Dendritic cell treated with granulocyte-macrophage colony-stimulating factor and Interleukin-4, amounts not matched to agents 40 ng/mL and 50 ng/mL, for 4 days (primary cell): ENCODE measurements at regions of chr18 and their contacts with region 1.

Region 1: DNA sequence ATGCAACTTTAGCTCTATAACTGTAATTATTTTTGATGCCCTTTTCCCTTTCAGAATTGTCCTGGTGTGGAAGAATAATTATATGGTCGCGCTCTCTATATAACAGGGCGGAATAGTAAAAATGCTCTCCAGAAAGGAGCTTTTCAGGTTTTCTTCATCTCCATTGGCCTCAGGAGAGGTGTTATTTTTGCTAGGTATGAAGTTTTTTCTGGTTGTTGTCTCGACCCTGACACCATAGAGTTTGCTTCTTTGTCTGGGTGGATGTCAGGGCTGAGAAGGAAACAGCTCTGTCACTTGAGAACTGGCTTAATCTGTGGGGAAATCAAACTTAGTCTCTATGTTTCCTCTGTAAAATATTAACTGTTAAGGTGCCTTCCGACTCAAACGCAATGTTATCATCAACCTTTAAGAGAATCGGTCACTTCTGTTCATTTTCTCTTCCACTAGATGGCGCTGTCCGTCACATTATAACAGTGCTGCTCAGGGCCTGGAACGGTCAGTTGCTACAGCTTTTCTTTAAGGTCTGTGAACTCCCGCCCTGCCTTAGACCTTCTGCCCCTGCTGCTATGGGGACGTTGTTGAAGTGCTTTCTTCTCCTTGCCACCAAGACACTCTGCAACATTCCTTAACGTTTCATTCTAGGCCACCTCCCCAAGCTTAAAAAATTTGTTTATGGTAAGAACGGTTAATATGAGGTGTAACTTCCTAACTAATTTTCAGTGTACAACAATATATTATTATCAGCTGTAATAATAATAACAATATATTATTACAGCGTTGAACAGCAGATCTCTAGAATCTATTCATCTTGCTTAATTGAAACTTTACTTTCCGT is 23.8 kb upstream of the SERPINB12 start:
- H3K4me3 Mint-ChIP-seq: no peak overlapping the region
- H3K27ac Mint-ChIP-seq: no peak overlapping the region
- H3K4me1 Mint-ChIP-seq: no peaks in the 10 kb centered on the region
- H3K27me3 Mint-ChIP-seq: peaks cover 2% of the 10 kb centered on the region

Region 2: DNA sequence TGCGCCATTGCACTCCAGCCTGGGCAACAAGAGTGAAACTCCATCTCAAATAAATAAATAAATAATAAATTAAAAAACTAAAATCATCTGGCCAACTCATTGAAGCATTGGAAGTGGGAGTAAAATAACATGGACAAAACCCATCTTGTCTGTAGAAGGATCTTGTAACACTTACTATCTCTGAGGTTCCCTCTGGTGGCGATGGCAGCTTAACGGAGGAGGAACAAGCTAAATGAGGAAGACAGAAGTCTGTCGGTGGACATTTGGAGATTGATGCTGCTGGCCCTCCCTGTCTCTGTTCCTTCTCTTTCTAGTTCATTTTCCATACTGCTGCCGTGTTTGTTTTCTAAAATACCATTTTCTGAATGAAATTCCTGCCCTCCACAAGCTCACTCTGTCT is 952.2 kb before region 1 on chr18:
- intact Hi-C with region 1: no loop called
- H3K4me3 Mint-ChIP-seq: no peak overlapping the region
- H3K27ac Mint-ChIP-seq: no peak overlapping the region
- H3K4me1 Mint-ChIP-seq: peaks cover 6% of the 10 kb centered on the region
- H3K27me3 Mint-ChIP-seq: no peaks in the 10 kb centered on the region

Region 3: DNA sequence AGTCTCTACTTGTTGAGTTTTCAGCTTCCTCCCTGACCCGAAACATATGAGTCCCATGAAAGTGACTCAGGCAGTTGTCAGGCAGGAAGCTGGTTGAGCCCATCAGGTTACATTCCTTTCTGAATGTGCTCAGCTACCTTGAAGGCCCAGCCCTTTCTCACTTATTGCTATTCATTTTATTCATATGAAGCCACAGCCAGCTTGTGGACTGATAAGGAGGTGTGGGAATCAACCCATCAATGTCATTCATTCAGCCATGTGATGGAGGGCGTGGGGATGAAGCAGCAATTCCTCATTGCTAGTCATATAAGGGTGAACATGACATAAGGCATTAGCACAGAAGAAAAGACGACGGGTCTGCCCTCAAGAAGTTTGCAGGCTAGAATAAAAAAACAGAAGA is 90.8 kb before region 1 on chr18:
- intact Hi-C with region 1: no loop called
- H3K4me3 Mint-ChIP-seq: no peak overlapping the region
- H3K27ac Mint-ChIP-seq: no peak overlapping the region
- H3K4me1 Mint-ChIP-seq: peaks cover 12% of the 10 kb centered on the region
- H3K27me3 Mint-ChIP-seq: no peaks in the 10 kb centered on the region

Region 4: GRCh38 chr18:63578357-63578958 is 60.1 kb after region 1 on chr18:
- intact Hi-C with region 1: loop called (anchors 1 kb)
- H3K4me3 Mint-ChIP-seq: no peak overlapping the region
- H3K27ac Mint-ChIP-seq: no peak overlapping the region
- H3K4me1 Mint-ChIP-seq: peaks cover 28% of the 10 kb centered on the region
- H3K27me3 Mint-ChIP-seq: no peaks in the 10 kb centered on the region

Region 5: DNA sequence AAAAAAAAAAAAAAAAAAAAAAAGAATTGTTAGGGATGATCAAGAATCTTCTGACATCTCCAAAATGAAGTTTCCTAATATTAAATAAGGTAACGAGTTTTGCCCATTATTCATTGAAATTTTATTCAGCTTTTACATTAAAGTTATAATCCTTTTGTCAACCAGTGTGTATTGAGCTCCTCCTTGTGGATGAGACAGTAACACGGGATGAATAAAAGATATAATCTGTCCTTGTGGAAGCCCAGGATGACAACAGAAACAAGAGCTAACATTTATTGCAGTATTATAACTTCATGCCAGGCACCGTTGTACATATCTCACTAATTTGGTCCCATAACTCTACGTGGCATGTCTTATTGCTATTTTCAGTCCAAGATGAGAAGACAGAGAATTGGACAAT is 223.4 kb after region 1 on chr18:
- intact Hi-C with region 1: loop called (anchors 10 kb)
- H3K4me3 Mint-ChIP-seq: no peak overlapping the region
- H3K27ac Mint-ChIP-seq: no peak overlapping the region
- H3K4me1 Mint-ChIP-seq: no peaks in the 10 kb centered on the region
- H3K27me3 Mint-ChIP-seq: peaks cover 4% of the 10 kb centered on the region

Region 6: DNA sequence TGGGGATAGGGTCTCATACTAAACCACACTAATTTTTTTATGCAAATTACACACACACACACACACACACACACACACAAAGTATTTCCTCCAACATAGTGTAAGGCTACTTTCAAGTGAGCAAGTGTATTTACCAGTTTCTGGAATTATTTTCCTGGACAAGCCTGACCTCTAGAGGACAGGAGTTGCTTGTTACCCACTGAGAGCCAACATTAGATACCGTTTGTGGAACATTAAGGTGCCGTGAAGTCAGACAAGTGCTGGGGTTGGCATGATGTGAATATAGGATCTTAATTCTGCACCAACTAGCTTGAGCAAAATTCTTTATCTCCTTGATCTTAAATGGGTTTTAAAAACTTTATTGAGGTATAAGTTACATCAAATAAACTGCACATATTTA is 329.8 kb after region 1 on chr18:
- intact Hi-C with region 1: loop called (anchors 1 kb)
- H3K4me3 Mint-ChIP-seq: no peak overlapping the region
- H3K27ac Mint-ChIP-seq: no peak overlapping the region
- H3K4me1 Mint-ChIP-seq: no peaks in the 10 kb centered on the region
- H3K27me3 Mint-ChIP-seq: no peaks in the 10 kb centered on the region

Region 7: DNA sequence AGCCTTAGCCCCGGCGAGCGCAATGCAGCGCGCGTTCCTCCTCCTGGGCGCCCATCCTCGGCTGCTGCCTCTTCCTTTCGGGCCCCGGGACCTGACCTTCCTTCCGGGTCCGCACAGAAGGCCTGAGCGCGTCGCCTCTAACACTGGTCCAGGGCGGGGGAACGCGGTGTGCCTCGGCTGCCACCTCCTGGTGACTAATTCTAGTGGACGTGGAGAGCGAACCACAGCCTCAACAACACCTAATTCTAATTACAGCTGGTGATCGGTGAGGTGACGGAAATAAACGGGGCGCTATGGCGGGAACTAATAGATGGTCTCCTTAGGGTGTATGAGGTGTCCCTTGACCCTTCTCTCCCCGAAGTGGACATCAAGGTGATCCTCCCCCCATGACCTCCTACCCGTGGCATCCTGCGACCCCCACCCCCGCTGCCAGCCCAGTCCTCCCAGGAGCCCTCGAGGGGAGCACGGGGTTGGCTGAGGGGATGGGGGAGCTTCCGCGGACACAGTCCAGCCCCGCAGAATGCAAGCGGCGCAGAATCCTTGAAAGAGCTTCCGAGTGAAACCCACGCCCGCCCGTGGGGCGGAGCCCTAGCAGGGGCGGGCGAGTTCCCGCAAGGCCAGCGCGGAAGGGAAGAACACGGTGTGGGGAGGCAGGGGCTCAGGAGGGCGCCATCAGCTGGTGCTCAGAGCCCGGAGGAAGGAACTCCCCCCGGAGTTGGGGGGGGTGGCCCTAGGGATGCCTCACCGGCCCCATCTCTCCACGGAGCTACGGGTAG is 417.9 kb after region 1 on chr18:
- intact Hi-C with region 1: loop called (anchors 5 kb)
- H3K4me3 Mint-ChIP-seq: no peak overlapping the region
- H3K27ac Mint-ChIP-seq: no peak overlapping the region
- H3K4me1 Mint-ChIP-seq: peaks cover 6% of the 10 kb centered on the region
- H3K27me3 Mint-ChIP-seq: no peaks in the 10 kb centered on the region

Region 8: GRCh38 chr18:63994783-63995399 is 476.5 kb after region 1 on chr18:
- intact Hi-C with region 1: loop called (anchors 10 kb)
- H3K4me3 Mint-ChIP-seq: no peak overlapping the region
- H3K27ac Mint-ChIP-seq: no peak overlapping the region
- H3K4me1 Mint-ChIP-seq: peaks cover 5% of the 10 kb centered on the region
- H3K27me3 Mint-ChIP-seq: no peaks in the 10 kb centered on the region